Stomach (tissue), 19 donors: ENCODE measurements at regions of chr7 and their contacts with region 1.

Region 1: GRCh38 chr7:98021588-98022351 is 31.8 kb upstream of the OCM2 start:
- DNase-seq: peak; percentile 88
- H3K4me3 ChIP-seq: no peak overlapping the region
- H3K27ac ChIP-seq: no peak overlapping the region
- H3K4me1 ChIP-seq: peaks cover 0 to 4% (median 0%) of the 10 kb centered on the region in 4 donors
- H3K27me3 ChIP-seq: peaks cover 0 to 12% (median 0%) of the 10 kb centered on the region in 3 donors
- CTCF ChIP-seq: peak in 5 of 7 experiments; percentile 81 to 98 (median 89)
- EP300 ChIP-seq: no peak
- POLR2A ChIP-seq: no peak

Region 2: DNA sequence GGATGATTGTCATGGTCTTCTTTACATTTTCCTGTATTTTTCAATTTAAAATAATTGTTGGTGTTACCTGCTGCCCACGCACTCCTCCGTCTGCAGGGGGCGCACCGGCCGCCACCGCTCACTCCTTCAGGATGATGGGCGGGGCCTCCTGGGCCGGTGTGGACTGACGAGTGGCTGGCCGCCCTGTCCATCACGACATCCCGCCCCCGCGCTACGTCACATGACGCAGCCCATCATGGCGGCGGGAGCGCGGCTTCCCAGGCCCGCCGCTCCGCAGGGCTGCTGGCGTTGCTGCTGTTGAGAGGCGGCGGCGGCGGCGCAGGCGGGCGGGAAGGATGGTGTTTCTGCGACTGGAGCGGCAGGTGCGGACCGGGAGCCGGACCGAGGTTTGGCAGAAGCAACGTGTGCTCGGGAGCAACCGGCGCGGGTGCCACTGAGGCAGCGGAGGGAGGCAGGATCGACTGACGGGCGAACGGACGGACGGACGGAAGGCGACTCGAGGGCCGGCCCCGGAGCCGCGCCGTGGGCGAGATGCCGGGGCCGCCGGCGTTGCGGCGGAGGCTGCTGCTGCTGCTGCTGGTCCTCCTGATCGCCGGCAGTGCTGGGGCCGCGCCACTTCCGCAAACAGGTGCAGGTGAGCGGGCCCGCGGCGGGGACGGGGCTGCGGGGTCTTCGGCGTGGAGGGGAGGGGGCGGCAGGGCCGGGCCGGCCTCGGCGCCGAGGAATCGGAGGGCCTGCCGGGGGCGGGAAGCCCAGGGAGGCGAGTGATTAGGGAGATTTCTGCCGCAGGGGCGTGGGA is 85.1 kb after region 1 on chr7 and contains the start of gene LMTK2:
- intact Hi-C with region 1: no loop called
- DNase-seq: peak; percentile 96 to 98
- H3K4me3 ChIP-seq: peak within 1 kb of the TSS; percentile 87 to 100 (median 94)
- H3K27ac ChIP-seq: peak within 1 kb of the TSS; percentile 89 to 92 (median 91)
- H3K4me1 ChIP-seq: peaks cover 33 to 45% (median 41%) of the 10 kb centered on the region in 4 donors
- H3K27me3 ChIP-seq: no peaks in the 10 kb centered on the region
- CTCF ChIP-seq: peak in 5 of 7 experiments; percentile 93 to 98 (median 94)
- EP300 ChIP-seq: no peak
- POLR2A ChIP-seq: peak in 2 of 4 donors; percentile 41 to 90
- total RNA-seq, gene LMTK2: 18.2 to 42.6 (median 20.6) TPM

Region 3: DNA sequence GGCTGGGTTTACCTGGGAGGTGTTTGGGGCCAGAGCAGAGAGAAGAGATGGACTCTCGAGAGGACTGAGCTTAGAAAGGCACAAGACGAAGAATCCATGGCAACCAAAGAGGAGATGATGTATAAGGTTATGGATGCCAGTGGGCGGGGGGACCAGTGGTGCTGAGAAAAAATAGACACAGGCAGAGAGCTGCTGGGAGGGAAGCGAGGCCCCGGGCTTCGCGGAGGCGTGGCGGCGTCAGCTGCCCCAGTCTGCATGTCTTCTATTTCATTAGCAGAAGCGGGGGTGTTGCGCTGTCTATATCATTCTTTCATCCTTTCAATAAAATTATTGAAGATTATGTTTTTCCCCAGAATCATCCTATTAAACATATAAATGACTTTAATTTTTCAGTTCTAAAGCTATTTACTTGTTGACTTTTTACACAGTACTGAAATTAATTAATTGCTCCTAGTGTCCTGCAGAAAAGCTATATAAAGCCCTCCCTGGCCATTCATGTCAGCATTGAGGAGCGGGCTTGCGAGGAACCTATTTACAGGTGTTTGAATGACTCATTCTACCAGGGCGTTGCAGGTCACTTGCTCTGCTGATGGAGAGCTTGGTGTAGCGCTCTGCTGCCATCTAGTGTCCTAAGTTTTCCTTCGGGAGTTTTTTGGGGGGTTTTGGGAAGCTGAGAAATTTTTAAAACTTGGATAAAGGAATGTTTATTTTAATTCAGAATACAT is 146.6 kb after region 1 on chr7:
- intact Hi-C with region 1: loop called (anchors 5 kb)
- DNase-seq: peak; percentile 73 to 89
- H3K4me3 ChIP-seq: no peak overlapping the region
- H3K27ac ChIP-seq: no peak overlapping the region
- H3K4me1 ChIP-seq: peaks cover 7 to 55% (median 42%) of the 10 kb centered on the region in 4 donors
- H3K27me3 ChIP-seq: no peaks in the 10 kb centered on the region
- CTCF ChIP-seq: peak in 5 of 7 experiments; percentile 55 to 82 (median 81)
- EP300 ChIP-seq: no peak
- POLR2A ChIP-seq: no peak

Region 4: DNA sequence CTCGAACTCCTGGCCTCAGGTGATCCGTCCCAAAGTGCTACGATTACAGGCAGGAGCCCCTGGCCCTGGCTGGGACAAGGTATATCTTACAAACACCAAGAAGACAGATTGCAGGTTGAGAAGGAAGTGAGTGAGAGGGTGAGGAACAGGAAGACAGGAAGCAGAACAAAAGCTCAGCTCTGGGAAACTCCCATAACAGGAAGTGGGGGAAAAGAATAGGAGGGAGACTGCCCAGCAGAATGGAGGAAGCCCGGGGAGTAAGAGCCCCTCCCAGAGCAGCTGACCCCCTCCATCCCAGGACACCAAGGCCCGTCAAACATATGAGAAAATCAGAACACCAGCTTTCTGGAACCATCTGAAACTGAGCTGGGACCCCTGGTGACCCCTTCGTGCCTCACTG is 227.3 kb after region 1 on chr7:
- intact Hi-C with region 1: loop called (anchors 5 kb)
- DNase-seq: peak in 1 of 2 donors; percentile 47
- H3K4me3 ChIP-seq: no peak overlapping the region
- H3K27ac ChIP-seq: peak overlapping the region; percentile 35 to 94 (median 52)
- H3K4me1 ChIP-seq: peaks cover 33 to 67% (median 40%) of the 10 kb centered on the region in 4 donors
- H3K27me3 ChIP-seq: no peaks in the 10 kb centered on the region
- CTCF ChIP-seq: no peak
- EP300 ChIP-seq: no peak
- POLR2A ChIP-seq: no peak